Head of caudate nucleus (tissue), 42 donors: ENCODE measurements at regions of chr9 and their contacts with region 1.

Region 1: GRCh38 chr9:899440-900184 is 58.1 kb downstream of the DMRT1 start:
- DNase-seq: peak in 3 of 42 donors; percentile 4 to 5 (median 4)

Region 2: GRCh38 chr9:677461-678097 is 222.0 kb before region 1 on chr9:
- intact Hi-C with region 1: no loop called
- DNase-seq: peak in 1 of 42 donors; percentile 55

Region 3: GRCh38 chr9:950139-950538 is 50.5 kb after region 1 on chr9:
- intact Hi-C with region 1: no loop called
- DNase-seq: no peak

Region 4: GRCh38 chr9:1009101-1009707 is 109.6 kb after region 1 on chr9:
- intact Hi-C with region 1: loop called (anchors 5 kb)
- DNase-seq: peak; percentile 38 to 94 (median 85)